Activated CD4-positive, alpha-beta T cell treated with anti-CD3 and anti-CD28 coated beads for 36 hours (primary cell): ENCODE measurements at regions of chr6 and their contacts with region 1.

Region 1: GRCh38 chr6:13454286-13455221 is 32.8 kb downstream of the GFOD1 start:
- DNase-seq: peak; percentile 88
- ATAC-seq: peak; percentile 66
- H3K4me3 Mint-ChIP-seq: peak overlapping the region; percentile 36
- H3K27ac Mint-ChIP-seq: peak overlapping the region; percentile 95
- H3K4me1 Mint-ChIP-seq: peaks cover 63% of the 10 kb centered on the region
- H3K27me3 Mint-ChIP-seq: no peaks in the 10 kb centered on the region

Region 2: GRCh38 chr6:12065321-12066140 is 1389.0 kb before region 1 on chr6:
- CTCF ChIA-PET with region 1: no interaction called
- POLR2A ChIA-PET with region 1: no interaction called
- intact Hi-C with region 1: no loop called
- DNase-seq: peak; percentile 45
- ATAC-seq: peak; percentile 52
- H3K4me3 Mint-ChIP-seq: peak overlapping the region; percentile 16
- H3K27ac Mint-ChIP-seq: peak overlapping the region; percentile 83
- H3K4me1 Mint-ChIP-seq: peaks cover 67% of the 10 kb centered on the region
- H3K27me3 Mint-ChIP-seq: no peaks in the 10 kb centered on the region

Region 3: GRCh38 chr6:13302751-13303667 is 151.5 kb before region 1 on chr6:
- CTCF ChIA-PET with region 1: no interaction called
- POLR2A ChIA-PET with region 1: no interaction called
- intact Hi-C with region 1: loop called in 1 of 2 experiments (anchors 1 kb)
- DNase-seq: peak; percentile 79
- ATAC-seq: peak; percentile 95
- H3K4me3 Mint-ChIP-seq: no peak overlapping the region
- H3K27ac Mint-ChIP-seq: peak overlapping the region; percentile 94
- H3K4me1 Mint-ChIP-seq: peaks cover 41% of the 10 kb centered on the region
- H3K27me3 Mint-ChIP-seq: no peaks in the 10 kb centered on the region

Region 4: DNA sequence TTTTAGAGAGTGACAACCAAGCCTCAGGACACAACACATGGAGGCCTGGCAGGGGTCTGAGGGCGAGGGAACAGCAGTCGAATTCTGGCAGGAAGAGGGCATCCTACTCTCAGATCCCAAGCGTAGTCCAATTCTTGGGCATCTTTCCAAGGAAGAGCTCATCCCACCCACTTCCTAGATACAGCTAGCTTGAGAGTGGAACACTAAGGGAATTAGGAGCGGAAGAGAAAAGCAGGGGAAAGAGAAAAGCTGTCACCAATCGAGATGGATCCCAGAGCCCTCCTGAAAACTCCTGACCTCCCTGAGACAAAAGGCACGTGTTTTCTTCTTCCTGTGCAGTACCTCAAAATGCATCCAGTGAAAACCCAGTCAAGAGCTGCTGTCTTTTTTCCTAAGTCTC is 34.3 kb before region 1 on chr6:
- CTCF ChIA-PET with region 1: no interaction called
- POLR2A ChIA-PET with region 1: no interaction called
- intact Hi-C with region 1: no loop called
- DNase-seq: no peak
- ATAC-seq: no peak
- H3K4me3 Mint-ChIP-seq: no peak overlapping the region
- H3K27ac Mint-ChIP-seq: no peak overlapping the region
- H3K4me1 Mint-ChIP-seq: peaks cover 24% of the 10 kb centered on the region
- H3K27me3 Mint-ChIP-seq: peaks cover 5% of the 10 kb centered on the region

Region 5: GRCh38 chr6:13466304-13467215 is 12.0 kb after region 1 on chr6:
- CTCF ChIA-PET with region 1: interaction called, 5 read pairs
- POLR2A ChIA-PET with region 1: interaction called, 8 read pairs
- intact Hi-C with region 1: loop called (anchors 1 kb)
- DNase-seq: peak; percentile 78
- ATAC-seq: peak; percentile 91
- H3K4me3 Mint-ChIP-seq: peak overlapping the region; percentile 44
- H3K27ac Mint-ChIP-seq: peak overlapping the region; percentile 87
- H3K4me1 Mint-ChIP-seq: peaks cover 71% of the 10 kb centered on the region
- H3K27me3 Mint-ChIP-seq: no peaks in the 10 kb centered on the region

Region 6: DNA sequence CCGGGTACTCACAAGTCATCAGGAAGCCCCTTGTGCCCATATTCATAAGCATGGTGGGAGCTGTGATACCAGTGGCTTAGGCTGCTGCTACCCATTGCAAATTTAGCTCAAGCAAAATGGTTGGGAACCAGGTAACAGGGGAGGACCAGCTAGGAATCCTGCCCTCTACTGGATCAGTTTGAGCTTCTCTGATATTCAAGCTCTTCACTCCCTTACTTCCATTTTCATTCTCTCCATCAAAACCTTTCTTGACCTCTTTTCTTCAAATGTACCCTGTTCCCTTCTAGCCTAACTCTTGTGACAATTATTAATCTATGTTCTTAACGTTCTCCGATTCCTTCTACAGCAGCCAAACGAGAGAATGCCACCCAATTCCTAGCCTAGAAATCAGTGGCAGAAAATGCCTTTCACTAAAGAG is 170.3 kb after region 1 on chr6:
- CTCF ChIA-PET with region 1: no interaction called
- POLR2A ChIA-PET with region 1: no interaction called
- intact Hi-C with region 1: no loop called
- DNase-seq: peak; percentile 29
- ATAC-seq: peak; percentile 91
- H3K4me3 Mint-ChIP-seq: no peak overlapping the region
- H3K27ac Mint-ChIP-seq: peak overlapping the region; percentile 15
- H3K4me1 Mint-ChIP-seq: peaks cover 19% of the 10 kb centered on the region
- H3K27me3 Mint-ChIP-seq: no peaks in the 10 kb centered on the region